OCI-LY7 (cell line): ENCODE measurements at regions of chr10 and their contacts with region 1.

Region 1: DNA sequence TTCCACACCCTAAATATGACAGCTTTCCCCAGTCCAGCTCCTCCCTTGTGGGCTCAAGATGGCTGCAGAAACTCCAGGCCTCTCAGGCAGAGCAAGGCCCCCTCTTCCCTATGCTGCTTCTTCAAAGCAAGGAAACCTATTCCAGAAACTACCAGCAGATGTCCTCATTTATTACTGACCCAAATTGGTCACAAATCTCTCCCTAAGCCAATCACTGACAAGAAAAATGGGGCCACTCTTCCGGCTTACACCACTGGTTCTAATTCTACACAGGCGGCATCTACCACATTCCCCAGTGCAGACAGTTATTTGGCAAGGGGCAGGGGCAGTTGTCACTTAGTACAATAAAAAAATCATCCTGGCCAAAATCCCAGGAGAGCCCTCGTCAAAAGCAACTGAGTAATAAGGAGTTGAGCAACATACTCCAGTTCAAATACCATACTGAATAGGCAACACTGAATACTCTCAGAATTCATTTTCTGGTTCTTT is 150.4 kb downstream of the SFMBT2 start:
- DNase-seq: peak; percentile 79
- H3K4me3 ChIP-seq: no peak overlapping the region
- H3K27ac ChIP-seq: no peak overlapping the region
- H3K4me1 ChIP-seq: peaks cover 14% of the 10 kb centered on the region
- CTCF ChIP-seq: peak; percentile 87

Region 2: GRCh38 chr10:7281429-7281828 is 21.0 kb after region 1 on chr10:
- CTCF ChIA-PET with region 1: no interaction called
- POLR2A ChIA-PET with region 1: no interaction called
- intact Hi-C with region 1: no loop called
- DNase-seq: no peak
- H3K4me3 ChIP-seq: no peak overlapping the region
- H3K27ac ChIP-seq: no peak overlapping the region
- H3K4me1 ChIP-seq: no peaks in the 10 kb centered on the region
- CTCF ChIP-seq: no peak

Region 3: DNA sequence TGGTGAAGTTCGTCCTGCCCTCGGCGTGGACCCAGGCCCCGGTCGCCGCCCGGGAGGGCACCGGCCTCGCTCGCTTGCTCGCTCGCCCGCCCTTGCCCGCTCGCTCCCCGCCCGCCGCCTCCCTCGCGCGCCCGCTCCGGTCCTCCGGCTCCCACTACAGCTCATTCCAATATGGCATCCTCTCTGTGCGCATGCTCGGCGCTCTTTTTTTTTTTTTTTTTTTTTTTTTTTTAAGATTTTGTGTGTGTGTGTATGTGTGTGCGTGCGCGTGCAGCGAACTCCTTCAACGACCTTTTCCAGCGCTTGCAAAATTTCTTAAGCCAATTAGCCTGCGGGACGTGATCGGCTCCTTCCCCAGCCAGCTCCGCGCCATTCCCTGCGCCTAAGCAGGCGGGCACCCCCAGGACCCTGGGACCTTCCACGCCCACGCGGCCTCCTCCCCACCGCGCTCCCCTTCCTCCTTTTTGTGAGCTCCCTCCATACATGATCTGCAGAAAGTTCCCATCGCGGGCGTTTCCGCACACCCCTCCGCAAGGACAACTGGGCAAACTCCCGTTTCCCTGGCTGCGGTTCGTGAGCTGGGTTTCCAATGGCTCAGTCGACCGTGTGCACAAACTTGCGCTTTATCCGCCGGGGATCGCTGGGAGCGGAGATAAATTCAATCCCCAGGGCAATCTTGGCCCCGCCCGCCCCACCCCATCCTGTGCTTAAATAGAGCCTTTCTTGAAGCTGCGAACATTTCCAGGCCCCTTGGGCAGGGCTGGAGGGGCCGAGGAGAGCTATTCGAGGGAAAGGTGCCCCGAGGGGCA is 150.6 kb after region 1 on chr10 and contains the start of gene SFMBT2:
- CTCF ChIA-PET with region 1: no interaction called
- POLR2A ChIA-PET with region 1: interaction called, 4 read pairs
- intact Hi-C with region 1: loop called (anchors 2 kb)
- DNase-seq: peak; percentile 77
- H3K4me3 ChIP-seq: peak within 1 kb of the TSS; percentile 95
- H3K27ac ChIP-seq: no peak within 1 kb of the TSS
- H3K4me1 ChIP-seq: peaks cover 16% of the 10 kb centered on the region
- CTCF ChIP-seq: no peak
- total RNA-seq, gene SFMBT2: 5.1 and 7.9 TPM in 2 replicates

Region 4: DNA sequence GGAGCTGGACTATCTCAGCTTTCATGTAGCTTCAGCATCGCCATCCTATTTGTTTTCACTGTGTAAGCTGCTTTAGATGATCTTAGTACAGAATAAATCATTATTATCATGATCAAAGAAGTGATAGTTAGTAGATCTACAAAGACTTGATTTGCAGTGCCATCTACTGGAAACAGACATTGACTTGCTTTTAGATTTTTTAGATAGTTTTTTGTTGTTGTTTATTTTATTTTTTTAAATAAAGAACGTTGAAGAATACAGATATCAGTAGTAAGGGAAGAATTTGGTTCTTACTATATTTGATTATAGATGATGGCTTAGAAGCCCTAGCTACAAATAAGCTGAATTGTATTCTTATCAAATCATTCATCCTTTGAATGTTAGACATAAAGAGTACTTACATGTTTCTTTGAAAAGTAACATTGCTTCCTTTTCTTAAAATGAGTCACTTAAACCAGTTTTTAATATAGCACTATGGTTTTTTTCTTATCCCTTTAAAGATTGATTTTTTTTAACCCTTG is 156.7 kb after region 1 on chr10:
- CTCF ChIA-PET with region 1: no interaction called
- POLR2A ChIA-PET with region 1: no interaction called
- intact Hi-C with region 1: loop called (anchors 1 kb)
- DNase-seq: peak; percentile 61
- H3K4me3 ChIP-seq: no peak overlapping the region
- H3K27ac ChIP-seq: no peak overlapping the region
- H3K4me1 ChIP-seq: peaks cover 3% of the 10 kb centered on the region
- CTCF ChIP-seq: peak; percentile 98

Region 5: GRCh38 chr10:7687228-7687907 is 426.9 kb after region 1 on chr10:
- CTCF ChIA-PET with region 1: no interaction called
- POLR2A ChIA-PET with region 1: no interaction called
- intact Hi-C with region 1: loop called (anchors 2 kb)
- DNase-seq: peak; percentile 91
- H3K4me3 ChIP-seq: no peak overlapping the region
- H3K27ac ChIP-seq: no peak overlapping the region
- H3K4me1 ChIP-seq: no peaks in the 10 kb centered on the region
- CTCF ChIP-seq: peak; percentile 100